ENCODE measurements at regions of chr1 and their contacts with region 1.

Region 1: GRCh38 chr1:204363335-204364124 is 3.8 kb upstream of the PLEKHA6 start:
- DNase-seq: peak; percentile 83
- H3K4me3 ChIP-seq: peak overlapping the region in 2 of 3 experiments; percentile 30 to 35
- H3K27ac ChIP-seq: no peak overlapping the region
- H3K4me1 ChIP-seq: peaks cover 53% of the 10 kb centered on the region
- H3K27me3 ChIP-seq: no peaks in the 10 kb centered on the region
- CTCF ChIP-seq: peak; percentile 93 to 94
- POLR2A ChIP-seq: no peak

Region 2: DNA sequence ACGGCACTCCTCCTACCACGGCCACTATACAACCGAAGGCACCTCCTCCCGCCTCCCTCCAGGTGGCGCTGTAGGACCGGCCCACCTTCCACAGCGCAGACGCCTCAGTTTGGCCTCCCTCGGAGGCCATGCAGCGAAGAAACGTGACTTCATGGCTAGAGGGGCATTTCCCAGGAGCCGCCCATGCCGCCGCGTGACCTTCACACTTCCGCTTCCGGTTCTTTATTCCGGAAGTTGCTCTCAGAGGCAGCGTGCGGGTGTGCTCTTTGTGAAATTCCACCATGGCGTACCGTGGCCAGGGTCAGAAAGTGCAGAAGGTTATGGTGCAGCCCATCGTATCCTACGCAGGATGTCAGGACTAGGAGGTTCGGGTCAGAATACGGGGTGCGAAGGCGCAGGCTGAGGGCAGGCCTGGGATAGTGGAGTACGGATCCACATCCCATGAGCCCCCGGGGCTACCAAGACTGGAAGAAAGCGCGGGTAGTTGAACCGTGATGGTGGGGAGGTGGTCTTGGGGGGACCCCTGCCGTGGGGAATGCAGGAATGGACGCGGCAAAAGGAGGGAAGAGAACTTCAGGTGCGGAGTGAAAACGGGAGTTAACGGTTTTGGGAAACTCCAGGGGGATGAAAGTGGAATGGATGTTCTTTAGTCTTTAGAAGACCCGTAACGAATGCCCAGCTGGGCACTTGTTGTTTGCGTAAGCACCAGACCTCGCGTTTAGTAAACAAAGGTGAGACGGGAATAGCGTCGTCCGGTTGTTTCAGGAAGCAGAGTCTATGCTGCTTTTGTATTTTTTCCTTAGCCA is 501.9 kb before region 1 on chr1 and contains the start of gene SNRPE:
- CTCF ChIA-PET with region 1: no interaction called
- POLR2A ChIA-PET with region 1: no interaction called
- dilution Hi-C with region 1: no loop called
- intact Hi-C with region 1: loop called (anchors 1 kb)
- DNase-seq: peak; percentile 99
- H3K4me3 ChIP-seq: peak within 1 kb of the TSS; percentile 67 to 99 (median 94)
- H3K27ac ChIP-seq: peak within 1 kb of the TSS; percentile 71
- H3K4me1 ChIP-seq: peaks cover 23% of the 10 kb centered on the region
- H3K27me3 ChIP-seq: no peaks in the 10 kb centered on the region
- CTCF ChIP-seq: peak; percentile 92 to 95
- POLR2A ChIP-seq: peak; percentile 84
- total RNA-seq, gene SNRPE: 199 and 219 TPM in 2 replicates

Region 3: GRCh38 chr1:204207136-204207616 is 156.4 kb before region 1 on chr1:
- CTCF ChIA-PET with region 1: interaction called, 60 read pairs
- POLR2A ChIA-PET with region 1: no interaction called
- dilution Hi-C with region 1: no loop called
- intact Hi-C with region 1: loop called (anchors 1 kb)
- DNase-seq: peak; percentile 41
- H3K4me3 ChIP-seq: no peak overlapping the region
- H3K27ac ChIP-seq: no peak overlapping the region
- H3K4me1 ChIP-seq: no peaks in the 10 kb centered on the region
- H3K27me3 ChIP-seq: no peaks in the 10 kb centered on the region
- CTCF ChIP-seq: peak; percentile 89 to 97
- POLR2A ChIP-seq: no peak

Region 4: DNA sequence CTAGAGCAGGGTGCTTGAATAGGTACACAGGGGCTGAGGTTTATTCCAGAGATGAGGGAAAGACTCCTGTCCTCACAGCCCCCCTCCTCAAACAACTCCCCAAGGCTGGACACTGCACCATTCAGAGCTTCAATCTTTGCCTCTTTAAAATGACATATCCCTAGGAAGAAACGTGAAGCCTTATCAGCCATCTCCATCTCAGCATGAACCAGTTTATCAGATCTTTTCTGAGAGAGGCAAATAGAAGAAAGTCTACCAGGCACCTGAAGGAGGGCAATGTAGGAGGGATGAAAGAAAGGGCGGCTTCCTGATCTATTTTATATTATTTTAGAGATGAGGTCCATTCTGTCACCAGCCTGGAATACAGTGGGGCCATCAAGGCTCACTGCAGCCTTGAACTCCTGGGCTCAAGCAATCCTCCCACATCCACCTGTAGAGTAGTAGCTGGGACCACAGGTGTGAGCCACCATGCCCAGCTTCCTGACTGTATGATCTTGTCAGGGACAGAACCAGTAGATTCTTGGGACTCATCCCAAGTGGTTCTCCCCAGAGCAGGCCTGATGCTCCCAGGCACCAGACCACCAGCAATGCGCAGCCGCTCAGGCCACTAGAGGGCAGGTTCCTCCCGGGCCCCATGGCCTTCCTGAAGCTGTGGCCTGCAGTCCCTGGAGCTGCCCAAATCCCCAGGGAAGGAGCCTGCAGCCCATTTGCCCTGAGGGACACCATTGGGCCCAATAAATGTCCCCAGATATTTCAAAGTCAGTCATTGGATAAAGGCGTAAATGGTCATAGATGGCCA is 105.4 kb before region 1 on chr1:
- CTCF ChIA-PET with region 1: interaction called, 318 read pairs
- POLR2A ChIA-PET with region 1: interaction called, 8 read pairs
- dilution Hi-C with region 1: no loop called
- intact Hi-C with region 1: loop called (anchors 1 kb)
- DNase-seq: peak; percentile 69
- H3K4me3 ChIP-seq: no peak overlapping the region
- H3K27ac ChIP-seq: no peak overlapping the region
- H3K4me1 ChIP-seq: no peaks in the 10 kb centered on the region
- H3K27me3 ChIP-seq: no peaks in the 10 kb centered on the region
- CTCF ChIP-seq: peak; percentile 89 to 96
- POLR2A ChIP-seq: no peak

Region 5: GRCh38 chr1:204350857-204351573 is 12.5 kb before region 1 on chr1:
- CTCF ChIA-PET with region 1: interaction called, 10 read pairs
- POLR2A ChIA-PET with region 1: interaction called, 3 read pairs
- dilution Hi-C with region 1: no loop called
- intact Hi-C with region 1: no loop called
- DNase-seq: peak; percentile 79
- H3K4me3 ChIP-seq: no peak overlapping the region
- H3K27ac ChIP-seq: no peak overlapping the region
- H3K4me1 ChIP-seq: peaks cover 4% of the 10 kb centered on the region
- H3K27me3 ChIP-seq: no peaks in the 10 kb centered on the region
- CTCF ChIP-seq: no peak
- POLR2A ChIP-seq: no peak